H1 (cell line): ENCODE measurements at regions of chr2 and their contacts with region 1.

Region 1: GRCh38 chr2:17470855-17471641 is 47.2 kb downstream of the RAD51AP2 start:
- DNase-seq: peak in 1 of 2 experiments; percentile 41
- H3K4me3 ChIP-seq: peak overlapping the region in 1 of 4 experiments; percentile 2; a peak in 1 of 8 replicates
- H3K27ac ChIP-seq: no peak overlapping the region
- H3K4me1 ChIP-seq: no peaks in the 10 kb centered on the region; a peak in 2 of 7 replicates
- H3K27me3 ChIP-seq: no peaks in the 10 kb centered on the region
- CTCF ChIP-seq: peak in 2 of 3 experiments; percentile 63 to 69; a peak in 3 of 4 replicates
- EP300 ChIP-seq: no peak
- POLR2A ChIP-seq: no peak
- RAD21 ChIP-seq: peak; percentile 91 to 93

Region 2: DNA sequence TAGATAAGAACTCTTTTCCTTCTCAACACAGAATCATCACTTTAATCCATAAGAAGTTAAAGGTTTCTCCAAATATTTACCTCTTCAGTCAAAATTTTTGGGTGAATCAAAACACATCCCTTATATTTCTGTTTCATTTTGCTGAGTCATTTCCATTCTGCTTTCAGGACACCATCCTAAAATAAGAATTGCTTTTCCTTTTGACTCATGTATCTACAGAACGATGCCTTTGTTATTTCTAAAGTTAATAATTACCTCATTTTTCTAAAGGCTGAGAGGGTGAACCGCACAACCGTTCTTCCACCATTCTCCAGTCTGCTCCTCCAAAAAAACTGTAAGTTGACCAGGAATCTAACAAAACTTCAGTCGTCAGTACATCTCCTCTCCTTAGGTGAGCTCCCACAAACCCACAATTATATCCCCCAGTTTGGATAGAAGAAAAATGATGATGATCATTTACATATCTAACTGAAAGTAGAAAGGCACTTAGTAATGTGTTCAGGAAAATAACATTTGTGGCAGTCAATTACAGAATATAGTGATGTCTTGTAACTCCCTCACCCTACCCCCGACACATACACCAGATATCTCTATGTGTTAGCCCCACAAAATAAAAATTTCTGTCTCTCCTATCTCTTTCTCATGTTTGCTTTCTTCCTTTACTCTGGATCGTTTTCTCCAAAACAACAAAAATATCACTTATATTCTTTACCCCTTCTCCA is 115.3 kb before region 1 on chr2:
- CTCF ChIA-PET with region 1: no interaction called
- POLR2A ChIA-PET with region 1: no interaction called
- DNase-seq: no peak
- H3K4me3 ChIP-seq: no peak overlapping the region
- H3K27ac ChIP-seq: no peak overlapping the region
- H3K4me1 ChIP-seq: no peaks in the 10 kb centered on the region
- H3K27me3 ChIP-seq: no peaks in the 10 kb centered on the region
- CTCF ChIP-seq: no peak
- EP300 ChIP-seq: no peak
- POLR2A ChIP-seq: no peak
- RAD21 ChIP-seq: no peak

Region 3: DNA sequence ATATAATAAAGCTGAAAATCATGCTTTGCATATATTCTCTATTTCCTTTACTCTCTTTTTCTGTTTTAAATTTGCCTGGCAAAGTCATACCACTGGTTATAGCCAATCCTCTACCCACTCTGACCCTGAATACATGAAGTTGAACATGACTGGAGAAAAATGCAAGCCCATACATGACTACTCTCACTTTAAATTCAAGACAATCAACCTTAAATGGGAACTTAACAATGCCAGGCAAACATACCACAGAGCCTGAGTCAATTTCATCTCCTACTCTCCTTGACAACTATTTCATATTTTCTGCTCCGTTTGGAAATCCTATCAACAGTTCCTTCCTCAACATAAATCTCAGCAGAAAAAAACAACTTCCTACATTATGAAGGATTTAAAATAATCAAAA is 24.5 kb after region 1 on chr2:
- CTCF ChIA-PET with region 1: no interaction called
- POLR2A ChIA-PET with region 1: no interaction called
- DNase-seq: no peak
- H3K4me3 ChIP-seq: no peak overlapping the region
- H3K27ac ChIP-seq: no peak overlapping the region
- H3K4me1 ChIP-seq: no peaks in the 10 kb centered on the region
- H3K27me3 ChIP-seq: no peaks in the 10 kb centered on the region
- CTCF ChIP-seq: no peak
- EP300 ChIP-seq: no peak
- POLR2A ChIP-seq: no peak
- RAD21 ChIP-seq: no peak

Region 4: DNA sequence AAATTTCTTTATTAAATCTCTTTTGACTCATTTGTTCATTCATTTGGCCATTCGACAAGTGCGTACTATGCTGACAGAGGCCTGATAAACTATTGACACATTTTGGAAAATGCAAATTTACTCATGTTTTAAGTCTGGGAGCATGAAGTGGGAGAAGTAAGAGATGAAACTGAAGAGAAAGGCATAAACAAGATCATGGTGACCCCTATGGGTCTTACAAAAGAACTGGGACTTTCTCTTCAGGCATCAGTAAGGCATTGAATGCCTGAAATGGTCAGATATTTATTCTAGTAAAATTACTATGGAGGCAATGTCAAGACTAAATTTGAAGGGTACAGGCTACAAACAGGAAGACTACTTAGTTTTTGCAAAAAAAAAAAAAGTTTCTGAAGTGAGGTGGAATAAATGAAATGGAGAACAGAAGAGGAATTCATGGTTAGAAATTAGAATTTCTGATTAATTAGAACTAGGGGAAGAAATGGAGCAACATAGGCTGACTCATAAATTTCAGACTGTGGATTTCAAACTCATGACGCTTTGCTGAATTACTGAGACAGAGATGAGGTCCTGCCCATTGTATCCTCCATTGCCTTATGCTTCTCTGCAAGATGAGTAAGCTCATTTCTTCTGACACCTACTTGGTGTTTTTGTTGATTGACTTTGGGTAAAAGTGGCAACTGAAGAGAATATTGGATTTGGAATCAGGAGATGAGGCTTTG is 102.2 kb after region 1 on chr2:
- CTCF ChIA-PET with region 1: interaction called, 12 read pairs
- POLR2A ChIA-PET with region 1: no interaction called
- DNase-seq: no peak
- H3K4me3 ChIP-seq: no peak overlapping the region
- H3K27ac ChIP-seq: no peak overlapping the region
- H3K4me1 ChIP-seq: no peaks in the 10 kb centered on the region; a peak in 2 of 7 replicates
- H3K27me3 ChIP-seq: no peaks in the 10 kb centered on the region
- CTCF ChIP-seq: peak in 2 of 3 experiments; percentile 29 to 51; a peak in 2 of 4 replicates
- EP300 ChIP-seq: no peak
- POLR2A ChIP-seq: no peak
- RAD21 ChIP-seq: peak; percentile 69 to 72

Region 5: DNA sequence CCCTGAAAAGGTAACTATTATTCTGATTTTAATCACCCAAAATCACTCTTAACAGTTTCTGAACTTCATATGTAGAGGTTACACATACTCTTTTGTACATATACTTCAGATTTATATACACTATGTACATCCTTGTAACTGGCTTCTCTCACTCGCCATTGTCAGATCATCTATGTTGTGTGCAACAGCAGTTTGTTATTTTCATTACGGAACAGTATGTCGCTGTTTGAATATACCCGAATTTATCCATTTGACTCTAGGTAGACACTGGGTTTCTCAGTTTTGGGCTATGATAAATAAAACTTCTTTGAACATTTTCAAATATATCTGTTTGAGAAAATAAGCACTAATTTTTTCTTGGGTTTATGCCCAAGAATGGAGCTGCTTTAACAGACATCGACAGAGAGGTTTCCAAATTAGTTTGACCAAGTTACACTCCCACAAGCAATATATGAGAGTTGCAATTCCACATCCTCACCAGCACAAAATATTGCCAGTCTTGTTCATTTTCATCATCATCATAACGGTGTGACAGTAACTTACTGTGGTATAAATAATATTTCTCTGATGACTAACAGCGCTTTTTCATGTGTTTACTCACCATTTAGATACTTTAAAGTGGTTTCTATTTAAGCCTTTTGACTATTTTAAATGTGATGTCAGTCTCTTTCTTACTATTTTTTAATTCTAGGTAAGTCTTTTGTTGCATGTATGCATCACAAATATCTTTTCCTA is 201.7 kb after region 1 on chr2:
- CTCF ChIA-PET with region 1: interaction called, 30 read pairs
- POLR2A ChIA-PET with region 1: no interaction called
- DNase-seq: no peak
- H3K4me3 ChIP-seq: no peak overlapping the region
- H3K27ac ChIP-seq: no peak overlapping the region
- H3K4me1 ChIP-seq: no peaks in the 10 kb centered on the region
- H3K27me3 ChIP-seq: no peaks in the 10 kb centered on the region
- CTCF ChIP-seq: no peak
- EP300 ChIP-seq: no peak
- POLR2A ChIP-seq: no peak
- RAD21 ChIP-seq: no peak